ENCODE measurements at regions of chr9 and their contacts with region 1.

Region 1: GRCh38 chr9:136527721-136528691 is 17.8 kb downstream of the NOTCH1 start:
- DNase-seq: no peak
- H3K4me3 ChIP-seq: no peak overlapping the region
- H3K27ac ChIP-seq: no peak overlapping the region
- H3K4me1 ChIP-seq: no peaks in the 10 kb centered on the region
- H3K27me3 ChIP-seq: no peaks in the 10 kb centered on the region
- CTCF ChIP-seq: no peak
- POLR2A ChIP-seq: no peak

Region 2: DNA sequence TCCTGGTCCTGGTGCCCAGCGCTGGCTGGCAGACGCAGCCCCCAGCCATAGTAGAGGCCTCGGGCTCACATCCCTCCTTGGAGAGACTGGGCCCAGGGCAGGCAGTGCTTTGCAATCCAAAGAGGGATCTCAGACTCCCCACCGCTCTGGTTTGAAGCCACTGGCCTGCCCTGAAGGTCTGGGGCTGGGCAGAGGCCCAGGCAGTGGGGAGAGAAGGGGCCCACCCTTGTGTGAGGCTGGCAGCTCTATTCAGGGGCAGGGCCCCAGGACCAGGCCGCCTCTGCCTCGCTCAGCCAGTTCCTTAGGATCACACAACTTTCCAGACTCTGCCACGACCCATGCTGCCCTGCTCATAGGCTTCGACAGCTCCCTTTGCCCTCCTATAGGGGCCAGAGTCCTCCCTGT is 34.4 kb before region 1 on chr9:
- intact Hi-C with region 1: loop called (anchors 5 kb)
- DNase-seq: no peak
- H3K4me3 ChIP-seq: no peak overlapping the region
- H3K27ac ChIP-seq: no peak overlapping the region
- H3K4me1 ChIP-seq: no peaks in the 10 kb centered on the region
- H3K27me3 ChIP-seq: no peaks in the 10 kb centered on the region
- CTCF ChIP-seq: no peak
- POLR2A ChIP-seq: no peak